ENCODE measurements at regions of chr1 and their contacts with region 1.

Region 1: DNA sequence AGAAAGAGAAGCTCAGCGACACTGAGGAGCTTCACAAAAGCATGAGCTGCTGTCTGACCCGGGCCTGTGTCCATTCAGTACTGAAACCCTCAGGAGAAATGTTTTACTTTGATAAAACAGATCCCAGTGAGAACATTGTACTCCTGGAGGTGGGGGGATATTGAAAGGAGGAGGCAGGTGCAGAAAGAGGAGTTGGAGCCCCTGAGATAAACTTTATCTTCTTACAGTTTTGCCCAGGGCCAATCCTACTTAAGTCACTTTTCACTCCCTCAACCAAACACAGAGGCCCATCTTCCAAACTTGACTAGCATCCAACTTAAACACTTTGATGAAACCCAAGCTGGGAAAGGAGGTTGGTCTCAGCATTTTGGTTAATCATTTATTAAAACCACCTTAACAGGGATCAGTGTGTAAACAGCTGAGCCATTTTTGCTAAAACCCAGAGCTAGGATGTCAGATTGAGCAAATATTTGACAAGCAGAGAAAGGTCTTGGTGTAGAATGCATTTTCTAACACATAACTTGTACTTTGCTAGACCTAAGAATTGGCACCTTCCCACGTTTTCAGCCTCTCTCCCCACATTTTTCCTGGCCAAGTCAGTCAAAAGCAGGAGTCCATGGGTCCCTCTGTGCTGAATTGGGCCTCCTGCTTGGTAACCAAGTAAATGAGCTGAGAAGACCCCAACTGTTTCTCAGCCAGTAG is 32.5 kb upstream of the SARS1 start:
- DNase-seq: peak; percentile 12
- H3K4me3 Mint-ChIP-seq: no peak overlapping the region
- H3K27ac Mint-ChIP-seq: no peak overlapping the region
- H3K4me1 Mint-ChIP-seq: peaks cover 13% of the 10 kb centered on the region
- H3K27me3 Mint-ChIP-seq: peaks cover 14% of the 10 kb centered on the region
- CTCF ChIP-seq: no peak

Region 2: GRCh38 chr1:109158433-109158832 is 22.8 kb before region 1 on chr1:
- CTCF ChIA-PET with region 1: no interaction called
- intact Hi-C with region 1: loop called (anchors 2 kb)
- DNase-seq: no peak
- H3K4me3 Mint-ChIP-seq: no peak overlapping the region
- H3K27ac Mint-ChIP-seq: no peak overlapping the region
- H3K4me1 Mint-ChIP-seq: no peaks in the 10 kb centered on the region
- H3K27me3 Mint-ChIP-seq: peaks cover 12% of the 10 kb centered on the region
- CTCF ChIP-seq: no peak

Measured in Calu3 (cell line).